ENCODE measurements at regions of chr19 and their contacts with region 1.

Region 1: DNA sequence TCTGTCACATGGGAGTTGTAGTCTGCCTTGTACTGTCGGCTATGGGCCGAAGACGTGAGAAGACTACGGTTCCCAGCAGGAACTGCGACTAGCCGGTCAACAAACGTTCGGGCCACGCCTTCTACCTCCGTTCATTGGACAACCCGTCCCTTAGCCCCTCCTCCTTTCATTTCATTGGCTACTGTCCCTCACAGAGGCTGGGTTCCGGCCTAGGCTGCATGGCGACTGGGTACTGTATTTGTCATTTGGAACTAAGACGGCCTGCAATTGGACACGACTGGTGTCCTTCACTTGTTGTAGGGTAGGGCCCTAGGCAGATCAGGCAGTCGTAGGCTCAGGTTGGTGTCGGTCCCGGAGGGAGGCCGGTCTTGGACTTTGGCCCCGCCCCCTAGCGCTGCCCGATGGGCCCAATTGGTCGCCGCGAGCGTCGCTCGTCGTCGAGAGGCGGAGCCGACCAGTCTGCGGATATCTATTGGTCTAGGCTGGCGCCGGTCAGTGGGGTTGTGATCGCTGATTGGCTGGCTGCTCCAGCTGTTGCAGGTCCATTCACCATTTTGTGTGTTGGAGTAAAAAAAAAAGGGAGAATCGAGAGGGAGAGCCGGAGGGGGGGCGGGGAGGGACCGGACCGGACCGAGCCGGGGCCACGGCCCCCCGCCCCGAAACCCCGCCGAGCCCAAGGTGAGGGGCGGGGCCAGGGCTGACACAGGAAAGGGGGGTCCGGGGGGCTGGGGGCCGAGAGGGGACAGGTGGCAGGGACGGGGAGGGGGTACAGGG is at the start of gene CIC:
- DNase-seq: peak; percentile 95
- ATAC-seq: peak; percentile 81
- H3K4me3 Mint-ChIP-seq: peak within 1 kb of the TSS; percentile 88
- H3K27ac Mint-ChIP-seq: peak within 1 kb of the TSS; percentile 94
- H3K4me1 Mint-ChIP-seq: peaks cover 31% of the 10 kb centered on the region
- H3K27me3 Mint-ChIP-seq: no peaks in the 10 kb centered on the region
- CTCF ChIP-seq: no peak
- total RNA-seq, gene CIC: 85.4 and 96.5 TPM in 2 replicates

Region 2: GRCh38 chr19:42254989-42255765 is 13.7 kb before region 1 on chr19 and contains the start of gene ERF:
- CTCF ChIA-PET with region 1: no interaction called
- POLR2A ChIA-PET with region 1: interaction called, 19 read pairs
- intact Hi-C with region 1: loop called (anchors 1 kb)
- DNase-seq: peak; percentile 97
- ATAC-seq: peak; percentile 76
- H3K4me3 Mint-ChIP-seq: peak within 1 kb of the TSS; percentile 84
- H3K27ac Mint-ChIP-seq: peak within 1 kb of the TSS; percentile 73
- H3K4me1 Mint-ChIP-seq: peaks cover 28% of the 10 kb centered on the region
- H3K27me3 Mint-ChIP-seq: peaks cover 5% of the 10 kb centered on the region
- CTCF ChIP-seq: no peak
- total RNA-seq, gene ERF: 47.9 and 48.1 TPM in 2 replicates

Measured in activated B cell treated with CpG ODN at 0.5 μM for 24 hours (primary cell).